ENCODE measurements at regions of chr15 and their contacts with region 1.

Region 1: GRCh38 chr15:31788104-31788503 is 242.2 kb upstream of the CHRNA7 start:
- DNase-seq: no peak
- ATAC-seq: no peak
- H3K4me3 ChIP-seq: no peak overlapping the region
- H3K4me3 Mint-ChIP-seq: no peak overlapping the region
- H3K27ac ChIP-seq: no peak overlapping the region
- H3K27ac Mint-ChIP-seq: no peak overlapping the region
- H3K4me1 ChIP-seq: no peaks in the 10 kb centered on the region
- H3K4me1 Mint-ChIP-seq: no peaks in the 10 kb centered on the region
- H3K27me3 ChIP-seq: no peaks in the 10 kb centered on the region
- H3K27me3 Mint-ChIP-seq: peaks cover 5% of the 10 kb centered on the region
- CTCF ChIP-seq: no peak

Region 2: DNA sequence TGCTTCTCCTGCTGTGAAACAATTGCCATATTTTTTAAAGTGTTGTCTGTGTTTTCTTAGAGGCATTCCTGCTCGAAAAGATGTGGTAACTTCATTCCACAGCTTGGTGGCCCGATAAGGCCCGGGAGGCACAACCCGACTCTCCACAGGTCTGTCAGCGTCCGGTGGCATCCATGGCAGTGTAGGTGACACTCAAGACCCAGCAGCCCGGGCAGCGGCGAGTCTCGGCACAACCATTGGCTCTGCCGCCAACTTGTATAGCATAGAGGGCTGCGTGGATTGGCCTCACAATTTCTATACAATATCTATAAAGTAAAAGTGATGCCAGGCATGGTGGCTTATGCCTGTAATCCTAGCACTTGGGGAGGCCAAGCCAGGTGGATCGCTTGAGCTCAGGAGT is 20.0 kb before region 1 on chr15:
- CTCF ChIA-PET with region 1: no interaction called
- POLR2A ChIA-PET with region 1: no interaction called
- intact Hi-C with region 1: loop called in 1 of 2 experiments (anchors 2 kb)
- DNase-seq: no peak
- ATAC-seq: no peak
- H3K4me3 ChIP-seq: no peak overlapping the region
- H3K4me3 Mint-ChIP-seq: no peak overlapping the region
- H3K27ac ChIP-seq: no peak overlapping the region
- H3K27ac Mint-ChIP-seq: no peak overlapping the region
- H3K4me1 ChIP-seq: no peaks in the 10 kb centered on the region
- H3K4me1 Mint-ChIP-seq: no peaks in the 10 kb centered on the region
- H3K27me3 ChIP-seq: no peaks in the 10 kb centered on the region
- H3K27me3 Mint-ChIP-seq: peaks cover 4% of the 10 kb centered on the region
- CTCF ChIP-seq: no peak